ENCODE measurements at regions of chr11 and their contacts with region 1.

Region 1: GRCh38 chr11:44621140-44621681 is 55.7 kb downstream of the CD82 start:
- DNase-seq: peak; percentile 63
- H3K4me3 ChIP-seq: no peak overlapping the region
- H3K27ac ChIP-seq: no peak overlapping the region
- H3K4me1 ChIP-seq: peaks cover 23% of the 10 kb centered on the region
- H3K27me3 ChIP-seq: no peaks in the 10 kb centered on the region
- CTCF ChIP-seq: peak; percentile 94 to 98
- POLR2A ChIP-seq: no peak

Region 2: DNA sequence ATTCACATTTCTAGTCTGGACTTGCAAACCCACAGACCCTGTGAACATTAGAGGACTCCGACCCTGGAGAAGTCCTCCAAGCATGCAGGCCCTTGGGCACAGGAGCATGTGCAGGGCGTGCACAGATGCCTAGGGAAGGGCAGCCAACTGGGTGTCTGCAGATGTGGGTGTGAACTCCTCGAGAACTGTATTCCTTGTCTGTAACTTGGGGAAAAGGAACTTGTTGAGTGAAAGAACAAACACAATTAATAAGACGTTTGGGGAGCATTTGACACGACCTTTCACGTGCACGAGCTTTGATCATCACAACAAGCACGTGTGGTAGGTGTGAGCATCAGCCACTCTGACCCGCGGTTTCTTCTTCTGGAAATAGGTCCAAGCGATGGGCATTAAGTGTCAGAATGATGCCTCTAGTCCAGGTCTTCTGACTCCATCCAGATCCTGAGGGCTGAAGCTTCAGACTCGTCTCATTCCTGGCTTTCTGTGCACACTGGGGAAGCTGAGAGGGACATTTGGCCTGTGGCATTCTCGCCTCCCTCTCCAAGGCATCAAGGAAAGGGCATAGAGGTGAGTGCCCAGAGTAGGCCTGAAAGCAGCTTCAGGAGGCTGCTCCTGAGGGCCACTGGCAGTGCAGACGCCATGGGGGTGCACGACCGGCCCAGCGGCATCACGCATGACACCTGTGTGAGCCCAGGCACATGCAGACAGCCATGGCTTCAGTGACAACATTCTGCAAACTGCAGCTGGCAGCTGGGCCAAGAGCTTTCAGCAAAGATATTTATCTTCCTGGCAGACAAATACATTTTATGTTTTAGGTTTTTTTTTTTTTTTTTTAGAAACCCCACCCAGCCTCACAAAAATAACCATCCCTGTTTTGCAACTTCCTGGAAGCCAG is 343.8 kb before region 1 on chr11:
- CTCF ChIA-PET with region 1: no interaction called
- POLR2A ChIA-PET with region 1: no interaction called
- dilution Hi-C with region 1: no loop called
- intact Hi-C with region 1: no loop called
- DNase-seq: no peak
- H3K4me3 ChIP-seq: no peak overlapping the region
- H3K27ac ChIP-seq: no peak overlapping the region
- H3K4me1 ChIP-seq: no peaks in the 10 kb centered on the region
- H3K27me3 ChIP-seq: peaks cover 0 to 1% of the 10 kb centered on the region in 2 experiments
- CTCF ChIP-seq: no peak
- POLR2A ChIP-seq: no peak

Region 3: DNA sequence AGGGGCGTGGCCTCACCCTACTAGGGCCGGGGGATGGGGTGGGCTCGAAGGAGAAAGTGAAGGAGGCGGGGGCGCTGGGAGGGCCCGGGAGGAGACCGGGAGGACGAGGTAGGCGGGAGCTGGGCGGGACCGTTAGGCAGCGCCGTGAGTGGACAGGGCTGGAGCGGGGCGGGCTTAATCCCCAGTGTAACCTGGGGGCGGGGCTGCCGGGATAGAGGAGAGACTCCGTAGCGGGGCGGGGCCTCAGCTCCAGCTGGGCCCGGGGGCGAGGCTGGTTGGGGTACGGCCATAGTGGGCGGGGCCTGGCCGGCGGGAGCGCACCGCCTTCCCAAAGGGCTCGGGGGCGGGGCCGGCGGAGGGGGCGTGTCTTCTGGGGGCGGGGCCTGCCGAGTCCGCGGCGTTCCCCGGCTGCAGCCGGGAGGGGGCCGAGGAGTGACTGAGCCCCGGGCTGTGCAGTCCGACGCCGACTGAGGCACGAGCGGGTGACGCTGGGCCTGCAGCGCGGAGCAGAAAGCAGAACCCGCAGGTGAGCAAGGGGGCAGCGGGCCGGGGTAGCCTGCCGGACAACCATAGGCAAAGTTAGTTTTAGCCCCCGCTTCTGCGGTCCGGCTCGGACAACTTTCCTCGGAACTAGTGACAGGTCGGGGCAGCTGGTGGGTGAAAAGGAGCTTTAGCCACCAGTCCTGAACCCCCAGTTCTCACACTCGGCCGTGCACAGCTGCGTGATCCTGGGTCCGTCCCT is 55.8 kb before region 1 on chr11 and contains the start of gene CD82:
- CTCF ChIA-PET with region 1: interaction called, 860 read pairs
- POLR2A ChIA-PET with region 1: no interaction called
- dilution Hi-C with region 1: no loop called
- intact Hi-C with region 1: loop called (anchors 2 kb)
- DNase-seq: peak; percentile 99
- H3K4me3 ChIP-seq: peak within 1 kb of the TSS; percentile 25 to 42 (median 41)
- H3K27ac ChIP-seq: peak within 1 kb of the TSS; percentile 94
- H3K4me1 ChIP-seq: peaks cover 40% of the 10 kb centered on the region
- H3K27me3 ChIP-seq: no peaks in the 10 kb centered on the region
- CTCF ChIP-seq: peak; percentile 5 to 30
- POLR2A ChIP-seq: no peak
- total RNA-seq, gene CD82: 24.9 and 25.2 TPM in 2 replicates

Region 4: DNA sequence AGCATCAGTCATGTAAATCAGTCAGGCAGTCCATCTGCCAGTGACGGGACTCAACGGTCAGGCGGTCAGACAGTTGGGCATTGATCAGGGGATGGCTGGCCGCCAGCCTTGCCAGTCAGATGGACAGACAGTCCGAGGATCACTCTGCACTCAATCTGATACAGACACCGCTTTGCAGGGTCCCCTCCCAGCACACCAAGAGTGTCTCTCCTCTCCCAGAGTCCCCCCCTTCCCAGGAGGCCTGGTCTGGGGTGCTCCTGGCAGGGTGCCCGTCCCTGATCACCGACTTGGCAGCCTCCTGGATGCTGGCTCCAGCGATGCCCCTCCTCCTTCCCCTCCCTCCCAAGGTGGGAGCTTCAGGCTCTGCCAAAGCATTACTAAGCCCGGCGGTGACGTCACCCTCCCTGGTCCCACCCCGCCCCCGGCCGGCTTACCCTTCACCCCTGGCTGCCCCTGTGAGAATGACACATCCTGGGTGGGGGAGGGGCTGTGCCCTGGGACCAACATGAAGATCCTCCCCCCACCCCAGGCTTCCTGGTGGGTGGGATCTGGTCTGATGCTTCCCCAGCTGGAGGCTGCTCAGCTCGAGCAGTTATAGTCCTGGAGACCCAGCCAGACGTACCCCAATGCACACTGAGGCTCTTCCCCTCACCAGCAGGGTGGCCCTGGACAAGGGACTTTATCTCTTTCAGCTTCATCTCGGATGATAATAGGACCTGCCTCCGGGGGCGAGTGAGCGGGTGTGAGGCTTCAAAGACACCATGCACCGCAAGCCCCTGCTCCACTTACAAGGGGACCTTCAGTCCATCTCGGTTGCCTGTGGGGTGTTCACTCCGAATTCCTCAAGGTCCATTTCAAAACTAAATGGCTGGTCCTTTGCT is 13.4 kb after region 1 on chr11:
- CTCF ChIA-PET with region 1: interaction called, 32 read pairs
- POLR2A ChIA-PET with region 1: interaction called, 13 read pairs
- dilution Hi-C with region 1: no loop called
- intact Hi-C with region 1: loop called (anchors 1 kb)
- DNase-seq: peak; percentile 75
- H3K4me3 ChIP-seq: no peak overlapping the region
- H3K27ac ChIP-seq: no peak overlapping the region
- H3K4me1 ChIP-seq: peaks cover 20% of the 10 kb centered on the region
- H3K27me3 ChIP-seq: no peaks in the 10 kb centered on the region
- CTCF ChIP-seq: no peak
- POLR2A ChIP-seq: no peak

Region 5: DNA sequence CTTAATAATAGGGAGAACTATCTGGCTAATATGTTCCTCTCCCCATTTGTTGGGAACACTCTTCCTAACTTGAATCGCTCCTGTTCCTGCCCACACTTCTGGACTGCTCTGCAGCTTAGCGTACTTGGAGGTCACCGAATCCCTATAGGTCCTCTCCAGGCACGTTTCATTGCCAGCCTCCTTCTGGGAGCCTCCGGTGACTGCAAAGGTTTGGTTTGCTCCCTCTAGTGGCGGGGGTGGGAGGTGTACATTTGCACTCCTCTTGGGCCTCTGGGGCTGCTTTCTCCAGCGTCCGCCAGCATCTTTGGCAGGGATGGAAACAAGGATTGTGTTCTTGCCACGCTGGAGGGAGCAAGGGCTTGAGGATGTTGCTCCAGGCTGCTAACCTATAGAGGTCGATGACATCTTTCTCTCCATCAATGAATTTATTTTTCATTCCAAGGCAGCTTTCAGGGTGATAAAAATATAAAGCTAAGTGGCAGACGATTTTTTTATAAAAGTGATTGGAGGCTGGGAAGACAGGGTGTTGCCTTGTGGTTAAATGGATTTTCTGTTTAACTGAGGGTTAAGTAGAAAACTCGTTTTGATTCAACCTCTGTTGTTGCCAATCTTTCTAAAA is 154.3 kb after region 1 on chr11:
- CTCF ChIA-PET with region 1: interaction called, 34 read pairs
- POLR2A ChIA-PET with region 1: no interaction called
- dilution Hi-C with region 1: no loop called
- intact Hi-C with region 1: loop called (anchors 1 kb)
- DNase-seq: peak; percentile 60
- H3K4me3 ChIP-seq: no peak overlapping the region
- H3K27ac ChIP-seq: peak overlapping the region; percentile 58
- H3K4me1 ChIP-seq: peaks cover 21% of the 10 kb centered on the region
- H3K27me3 ChIP-seq: no peaks in the 10 kb centered on the region
- CTCF ChIP-seq: peak; percentile 75 to 86
- POLR2A ChIP-seq: no peak

Region 6: GRCh38 chr11:44911029-44911814 is 290.0 kb after region 1 on chr11:
- CTCF ChIA-PET with region 1: interaction called, 187 read pairs
- POLR2A ChIA-PET with region 1: no interaction called
- dilution Hi-C with region 1: no loop called
- intact Hi-C with region 1: loop called (anchors 1 kb)
- DNase-seq: peak; percentile 80
- H3K4me3 ChIP-seq: no peak overlapping the region
- H3K27ac ChIP-seq: no peak overlapping the region
- H3K4me1 ChIP-seq: peaks cover 2% of the 10 kb centered on the region
- H3K27me3 ChIP-seq: no peaks in the 10 kb centered on the region
- CTCF ChIP-seq: peak; percentile 73 to 88
- POLR2A ChIP-seq: no peak

Measured in endothelial cell of umbilical vein (primary cell).